Psoas muscle (tissue), 8 donors: ENCODE measurements at regions of chr5 and their contacts with region 1.

Region 1: GRCh38 chr5:39283231-39283818 is 64.0 kb upstream of the FYB1 start:
- DNase-seq: no peak
- ATAC-seq: peak; percentile 65 to 94 (median 82)
- H3K4me3 ChIP-seq: no peak overlapping the region
- H3K27ac ChIP-seq: no peak overlapping the region
- H3K4me1 ChIP-seq: peaks cover 5% of the 10 kb centered on the region
- H3K27me3 ChIP-seq: peaks cover 0 to 2% (median 0%) of the 10 kb centered on the region in 3 donors
- CTCF ChIP-seq: peak; percentile 66

Region 2: DNA sequence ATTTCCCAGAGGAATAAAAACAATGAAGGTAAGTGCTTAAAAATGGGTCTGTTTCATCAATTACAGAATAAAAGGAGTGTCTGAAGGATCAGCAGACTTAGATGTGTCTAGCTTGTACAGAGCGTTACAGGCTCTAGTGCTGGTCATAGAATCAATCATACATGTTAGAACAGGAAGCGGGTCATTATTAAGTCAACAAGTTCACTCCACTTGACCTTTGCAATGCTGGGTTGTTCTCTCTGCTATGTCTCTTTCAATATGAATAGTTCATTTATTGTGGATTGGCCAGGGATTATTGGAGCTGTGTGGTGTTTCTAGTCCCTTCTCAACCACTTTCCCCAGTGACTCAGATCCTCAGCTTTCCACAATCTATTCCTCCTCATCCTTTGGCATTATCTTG is 1045.6 kb before region 1 on chr5:
- intact Hi-C with region 1: no loop called
- DNase-seq: no peak
- ATAC-seq: no peak
- H3K4me3 ChIP-seq: no peak overlapping the region
- H3K27ac ChIP-seq: no peak overlapping the region
- H3K4me1 ChIP-seq: no peaks in the 10 kb centered on the region
- H3K27me3 ChIP-seq: no peaks in the 10 kb centered on the region
- CTCF ChIP-seq: no peak

Region 3: GRCh38 chr5:39151745-39152144 is 131.6 kb before region 1 on chr5:
- intact Hi-C with region 1: loop called in 1 of 2 experiments (anchors 5 kb)
- DNase-seq: no peak
- ATAC-seq: no peak
- H3K4me3 ChIP-seq: no peak overlapping the region
- H3K27ac ChIP-seq: no peak overlapping the region
- H3K4me1 ChIP-seq: peaks cover 6% of the 10 kb centered on the region
- H3K27me3 ChIP-seq: no peaks in the 10 kb centered on the region
- CTCF ChIP-seq: no peak

Region 4: DNA sequence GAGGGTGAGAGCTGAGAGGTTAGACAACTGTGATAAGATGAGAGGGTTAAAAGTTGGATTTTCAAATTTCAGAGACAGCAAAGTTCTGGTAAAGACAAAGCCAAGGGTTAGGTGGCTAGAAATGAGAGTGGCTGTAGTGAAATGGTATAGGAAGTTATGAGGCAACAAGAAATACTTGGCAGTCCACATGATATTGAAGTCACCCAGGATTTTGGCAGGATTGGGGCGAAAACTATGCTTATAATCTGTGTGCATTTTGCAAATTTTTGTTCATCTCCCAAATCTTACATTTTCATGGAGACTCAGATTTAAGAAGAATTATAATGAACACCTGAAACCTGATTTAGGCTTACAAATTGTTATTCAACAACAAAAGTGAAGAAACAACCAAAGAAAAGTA is 45.4 kb after region 1 on chr5:
- intact Hi-C with region 1: no loop called
- DNase-seq: no peak
- ATAC-seq: no peak
- H3K4me3 ChIP-seq: no peak overlapping the region
- H3K27ac ChIP-seq: no peak overlapping the region
- H3K4me1 ChIP-seq: no peaks in the 10 kb centered on the region
- H3K27me3 ChIP-seq: no peaks in the 10 kb centered on the region
- CTCF ChIP-seq: no peak